Adrenal gland (tissue), 19 donors: ENCODE measurements at regions of chr1 and their contacts with region 1.

Region 1: DNA sequence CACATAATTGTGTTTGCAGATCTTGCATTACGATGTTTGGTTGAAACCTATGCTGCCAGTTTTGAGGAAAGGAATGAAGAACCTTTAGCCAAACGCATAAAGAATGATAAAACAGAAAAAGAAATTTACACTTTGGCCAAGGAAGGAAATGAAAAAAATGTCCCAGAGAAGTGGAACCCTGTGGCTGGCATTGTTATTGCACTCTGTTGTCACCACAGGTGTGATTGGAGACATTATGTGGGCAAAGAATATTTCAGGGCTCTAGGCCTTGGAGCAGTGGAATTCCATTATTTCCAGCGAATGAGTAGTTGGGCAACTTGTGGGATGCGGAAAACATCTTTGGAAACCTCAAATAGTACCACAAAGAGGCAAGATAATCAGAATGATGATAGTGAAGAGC is 14.9 kb downstream of the TRMT13 start:
- DNase-seq: no peak
- H3K4me3 ChIP-seq: no peak overlapping the region
- H3K27ac ChIP-seq: no peak overlapping the region
- H3K4me1 ChIP-seq: peaks cover 6 to 7% of the 10 kb centered on the region in 2 donors
- H3K27me3 ChIP-seq: no peaks in the 10 kb centered on the region
- CTCF ChIP-seq: no peak
- POLR2A ChIP-seq: no peak

Region 2: DNA sequence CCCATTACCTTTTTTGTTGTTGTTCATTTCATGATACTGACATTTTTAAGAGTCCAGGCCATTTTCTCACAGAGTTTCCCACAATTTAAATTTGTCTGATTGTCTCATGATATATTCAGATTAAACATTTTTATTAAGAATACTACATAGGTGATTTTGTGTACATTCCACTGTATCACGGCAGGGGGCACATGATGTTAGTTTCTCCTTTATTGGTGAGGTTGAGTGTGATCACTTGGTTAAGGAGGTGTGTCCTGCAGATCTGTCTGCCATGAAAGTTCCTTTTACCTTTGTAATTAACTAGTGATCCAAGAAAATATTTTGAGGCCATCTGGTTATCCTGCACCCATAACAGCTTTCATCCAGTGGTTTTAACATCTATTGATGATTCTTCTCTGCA is 130.0 kb after region 1 on chr1:
- intact Hi-C with region 1: loop called in 1 of 2 experiments (anchors 10 kb)
- DNase-seq: no peak
- H3K4me3 ChIP-seq: no peak overlapping the region
- H3K27ac ChIP-seq: no peak overlapping the region
- H3K4me1 ChIP-seq: no peaks in the 10 kb centered on the region
- H3K27me3 ChIP-seq: no peaks in the 10 kb centered on the region
- CTCF ChIP-seq: no peak
- POLR2A ChIP-seq: no peak